ENCODE measurements at regions of chr5 and their contacts with region 1.

Region 1: DNA sequence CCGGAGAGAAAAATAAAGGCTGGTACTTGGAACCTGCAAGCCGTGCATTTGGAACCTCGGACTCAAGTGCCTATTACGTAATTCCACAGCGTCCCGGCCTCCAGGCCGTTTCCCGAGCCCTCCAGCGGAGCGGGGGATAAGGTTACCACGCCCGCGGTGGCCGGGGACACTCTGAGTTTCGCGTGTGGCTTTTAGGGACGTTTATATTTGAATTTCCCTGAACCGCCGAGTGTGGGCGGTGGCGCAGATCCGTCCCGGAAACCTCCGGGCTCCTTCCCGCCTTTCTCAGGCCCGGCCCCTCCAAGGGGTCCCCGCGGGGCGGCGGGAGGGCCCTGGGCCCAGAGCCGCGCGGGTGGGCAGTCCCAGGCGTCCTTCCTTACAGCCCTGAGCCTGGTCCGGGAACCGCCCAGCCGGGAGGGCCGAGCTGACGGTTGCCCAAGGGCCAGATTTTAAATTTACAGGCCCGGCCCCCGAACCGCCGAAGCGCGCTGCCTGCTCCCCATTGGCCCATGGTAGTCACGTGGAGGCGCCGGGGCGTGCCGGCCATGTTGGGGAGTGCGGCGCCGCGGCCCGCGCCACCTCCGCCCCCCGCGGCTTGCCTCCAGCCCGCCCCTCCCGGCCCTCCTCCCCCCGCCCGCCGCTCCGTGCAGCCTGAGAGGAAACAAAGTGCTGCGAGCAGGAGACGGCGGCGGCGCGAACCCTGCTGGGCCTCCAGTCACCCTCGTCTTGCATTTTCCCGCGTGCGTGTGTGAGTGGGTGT is at the start of gene LMNB1:
- DNase-seq: peak; percentile 96
- H3K4me3 ChIP-seq: peak within 1 kb of the TSS; percentile 36 to 92 (median 79)
- H3K27ac ChIP-seq: peak within 1 kb of the TSS; percentile 66 to 88 (median 78)
- H3K4me1 ChIP-seq: peaks cover 11 to 12% of the 10 kb centered on the region in 2 donors
- H3K27me3 ChIP-seq: no peaks in the 10 kb centered on the region
- CTCF ChIP-seq: peak in 1 of 6 experiments; percentile 8
- POLR2A ChIP-seq: peak in 1 of 2 donors; percentile 62
- total RNA-seq, gene LMNB1: 3.9 to 18.4 (median 6.5) TPM

Region 2: GRCh38 chr5:126676195-126676624 is 100.5 kb before region 1 on chr5:
- intact Hi-C with region 1: loop called (anchors 5 kb)
- DNase-seq: peak; percentile 43 to 54
- H3K4me3 ChIP-seq: no peak overlapping the region
- H3K27ac ChIP-seq: no peak overlapping the region
- H3K4me1 ChIP-seq: no peaks in the 10 kb centered on the region
- H3K27me3 ChIP-seq: no peaks in the 10 kb centered on the region
- CTCF ChIP-seq: peak; percentile 41 to 83 (median 78)
- POLR2A ChIP-seq: no peak